Uterus (tissue), 4 donors: ENCODE measurements at regions of chr1 and their contacts with region 1.

Region 1: GRCh38 chr1:204806943-204807687 is 63.5 kb upstream of the NFASC start:
- DNase-seq: peak; percentile 70 to 83
- H3K4me3 ChIP-seq: peak overlapping the region; percentile 31 to 38
- H3K27ac ChIP-seq: peak overlapping the region in 1 of 2 donors; percentile 59
- H3K4me1 ChIP-seq: no peaks in the 10 kb centered on the region
- H3K27me3 ChIP-seq: no peaks in the 10 kb centered on the region
- CTCF ChIP-seq: peak; percentile 82 to 98 (median 92)
- POLR2A ChIP-seq: no peak

Region 2: GRCh38 chr1:204941421-204942338 is 134.6 kb after region 1 on chr1:
- intact Hi-C with region 1: loop called (anchors 10 kb)
- DNase-seq: peak; percentile 65 to 73
- H3K4me3 ChIP-seq: no peak overlapping the region
- H3K27ac ChIP-seq: peak overlapping the region in 1 of 2 donors; percentile 53
- H3K4me1 ChIP-seq: no peaks in the 10 kb centered on the region
- H3K27me3 ChIP-seq: no peaks in the 10 kb centered on the region
- CTCF ChIP-seq: peak; percentile 82 to 92 (median 88)
- POLR2A ChIP-seq: no peak